Prostate gland (tissue), 2 donors: ENCODE measurements at regions of chr17 and their contacts with region 1.

Region 1: GRCh38 chr17:39621523-39622379 is 5.0 kb upstream of the PPP1R1B start:
- DNase-seq: peak; percentile 83
- H3K4me3 ChIP-seq: no peak overlapping the region
- H3K27ac ChIP-seq: no peak overlapping the region
- H3K4me1 ChIP-seq: peaks cover 22% of the 10 kb centered on the region
- H3K27me3 ChIP-seq: no peaks in the 10 kb centered on the region
- CTCF ChIP-seq: peak; percentile 98 to 100 (median 100)
- POLR2A ChIP-seq: no peak

Region 2: DNA sequence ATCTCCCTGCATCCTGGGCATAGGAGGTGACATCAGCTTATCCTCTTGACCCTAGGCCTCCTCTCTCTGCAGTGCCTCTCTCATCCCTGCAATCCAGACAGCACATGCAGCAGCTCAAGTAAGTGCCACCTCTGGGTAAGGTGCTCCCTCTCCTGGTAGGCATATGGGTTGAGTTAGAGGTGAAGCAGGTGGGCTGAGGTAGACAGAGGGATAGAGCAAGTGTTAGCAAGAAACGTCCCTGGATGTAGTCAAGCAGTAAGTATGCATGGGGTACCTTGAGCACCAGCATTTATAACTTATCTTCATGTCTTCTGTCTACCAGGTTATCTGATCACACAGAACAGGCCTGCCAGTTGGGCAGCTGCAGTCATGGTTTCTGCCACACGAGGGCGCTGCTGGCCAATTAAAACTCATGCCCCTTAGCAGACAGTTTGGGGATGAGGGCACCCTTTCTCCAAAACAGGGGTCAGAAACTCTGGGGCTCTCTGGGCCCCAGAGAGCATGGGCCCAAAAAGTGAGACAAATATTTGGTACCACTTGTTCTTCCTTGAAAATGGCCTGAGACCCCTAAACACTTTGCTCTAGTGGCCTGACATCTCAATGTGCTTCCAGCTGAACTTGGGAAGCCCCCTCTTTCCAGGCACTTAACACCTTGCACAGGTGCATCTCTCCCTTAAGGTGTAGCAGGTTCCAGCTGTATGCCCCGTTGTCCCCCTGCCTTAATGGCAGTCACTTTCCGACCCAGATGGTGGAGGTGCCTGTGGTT is 73.9 kb before region 1 on chr17:
- intact Hi-C with region 1: loop called (anchors 5 kb)
- DNase-seq: peak; percentile 56
- H3K4me3 ChIP-seq: no peak overlapping the region
- H3K27ac ChIP-seq: no peak overlapping the region
- H3K4me1 ChIP-seq: no peaks in the 10 kb centered on the region
- H3K27me3 ChIP-seq: no peaks in the 10 kb centered on the region
- CTCF ChIP-seq: peak; percentile 71 to 96 (median 94)
- POLR2A ChIP-seq: no peak

Region 3: GRCh38 chr17:39591958-39592954 is 29.5 kb before region 1 on chr17:
- intact Hi-C with region 1: no loop called
- DNase-seq: no peak
- H3K4me3 ChIP-seq: no peak overlapping the region
- H3K27ac ChIP-seq: no peak overlapping the region
- H3K4me1 ChIP-seq: no peaks in the 10 kb centered on the region
- H3K27me3 ChIP-seq: peaks cover 19% of the 10 kb centered on the region
- CTCF ChIP-seq: no peak
- POLR2A ChIP-seq: no peak

Region 4: DNA sequence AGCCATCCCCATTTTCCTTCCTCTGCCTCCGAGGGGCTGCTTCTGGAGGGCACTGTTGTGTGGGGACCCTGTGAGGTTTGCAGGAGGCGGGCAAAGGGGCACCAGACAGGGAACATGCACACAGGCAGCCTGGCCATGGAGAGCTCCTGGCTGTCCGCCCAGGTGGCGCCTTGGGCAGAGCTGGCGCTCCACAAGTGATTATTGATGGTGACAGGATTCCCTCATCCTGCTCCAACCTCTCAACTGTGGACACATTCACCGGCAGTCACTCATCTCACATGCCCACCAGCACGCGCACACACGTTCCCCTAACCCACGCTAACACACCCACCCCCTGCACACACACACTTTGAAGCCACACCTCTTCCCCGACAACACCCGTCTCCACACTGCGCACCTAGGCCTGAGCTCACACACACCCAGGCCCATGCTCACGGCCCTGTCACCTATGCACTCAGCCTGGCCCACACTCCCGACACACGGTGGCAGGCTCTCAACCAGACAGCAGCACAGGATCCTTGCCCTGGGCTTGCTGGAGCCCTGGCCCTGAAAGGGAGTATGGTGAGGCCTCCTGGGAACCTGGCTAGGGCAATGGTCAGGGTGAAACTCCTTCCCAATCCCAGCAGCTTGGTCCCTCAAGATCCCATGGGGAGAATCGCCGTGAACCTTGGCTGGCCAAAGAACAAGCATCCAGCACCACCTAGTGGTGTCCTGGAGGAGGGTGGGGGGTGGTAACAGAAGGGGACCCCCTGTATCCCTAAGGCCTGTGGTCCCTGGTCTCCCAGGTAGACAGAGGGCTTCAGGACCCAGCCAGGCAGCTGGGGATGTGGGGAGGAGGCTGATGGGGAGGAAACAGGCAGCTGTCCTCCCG is 50.1 kb after region 1 on chr17:
- intact Hi-C with region 1: loop called (anchors 5 kb)
- DNase-seq: peak; percentile 39
- H3K4me3 ChIP-seq: no peak overlapping the region
- H3K27ac ChIP-seq: no peak overlapping the region
- H3K4me1 ChIP-seq: peaks cover 23% of the 10 kb centered on the region
- H3K27me3 ChIP-seq: no peaks in the 10 kb centered on the region
- CTCF ChIP-seq: peak in 3 of 4 experiments; percentile 41 to 71 (median 69)
- POLR2A ChIP-seq: peak; percentile 15

Region 5: DNA sequence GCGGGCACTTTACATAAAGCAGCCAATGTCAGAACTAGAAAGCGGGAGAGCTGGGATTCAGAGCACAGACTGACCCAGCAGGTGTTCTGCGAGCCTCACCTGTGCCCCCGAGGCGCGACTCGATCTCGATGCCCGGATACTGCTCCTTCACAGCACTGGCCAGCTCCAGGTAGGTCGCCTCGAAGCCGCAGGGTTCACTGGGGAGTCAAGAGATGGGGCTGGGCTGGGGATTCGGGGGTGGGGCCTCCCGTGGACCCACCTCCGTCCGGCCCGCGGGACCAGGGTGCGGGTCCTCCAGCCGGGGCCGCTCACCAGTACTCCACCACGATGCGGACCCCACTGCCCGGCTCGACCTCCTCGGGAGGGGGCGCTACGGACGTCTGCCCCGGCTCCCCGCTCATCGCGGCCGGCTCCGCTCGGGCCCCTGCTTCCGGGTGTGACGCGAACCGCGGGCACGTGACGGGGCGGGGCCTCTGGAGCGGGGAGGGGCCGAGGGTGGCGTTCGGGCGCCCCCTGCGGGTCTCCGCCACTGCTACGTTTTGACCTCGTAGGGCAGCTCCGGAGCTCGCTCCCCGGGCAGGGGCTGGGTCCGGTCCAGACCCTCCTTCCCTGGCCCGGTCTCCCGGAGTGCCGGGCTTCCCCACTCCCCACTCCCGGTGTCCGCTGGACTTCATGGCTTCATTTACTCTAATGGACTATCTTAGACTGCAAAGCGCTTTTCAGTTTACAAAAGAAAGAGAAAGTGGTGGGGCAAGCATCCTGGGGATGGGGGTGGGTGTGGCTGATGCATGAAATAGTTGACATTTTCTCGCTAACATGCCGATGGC is 108.6 kb after region 1 on chr17 and contains the start of gene MIEN1:
- intact Hi-C with region 1: loop called (anchors 5 kb)
- DNase-seq: peak; percentile 90
- H3K4me3 ChIP-seq: peak within 1 kb of the TSS; percentile 61 to 85
- H3K27ac ChIP-seq: peak within 1 kb of the TSS; percentile 89 to 95
- H3K4me1 ChIP-seq: no peaks in the 10 kb centered on the region
- H3K27me3 ChIP-seq: no peaks in the 10 kb centered on the region
- CTCF ChIP-seq: peak; percentile 95 to 98 (median 96)
- POLR2A ChIP-seq: peak; percentile 81
- total RNA-seq, gene MIEN1: 46.5 to 119 TPM

Region 6: DNA sequence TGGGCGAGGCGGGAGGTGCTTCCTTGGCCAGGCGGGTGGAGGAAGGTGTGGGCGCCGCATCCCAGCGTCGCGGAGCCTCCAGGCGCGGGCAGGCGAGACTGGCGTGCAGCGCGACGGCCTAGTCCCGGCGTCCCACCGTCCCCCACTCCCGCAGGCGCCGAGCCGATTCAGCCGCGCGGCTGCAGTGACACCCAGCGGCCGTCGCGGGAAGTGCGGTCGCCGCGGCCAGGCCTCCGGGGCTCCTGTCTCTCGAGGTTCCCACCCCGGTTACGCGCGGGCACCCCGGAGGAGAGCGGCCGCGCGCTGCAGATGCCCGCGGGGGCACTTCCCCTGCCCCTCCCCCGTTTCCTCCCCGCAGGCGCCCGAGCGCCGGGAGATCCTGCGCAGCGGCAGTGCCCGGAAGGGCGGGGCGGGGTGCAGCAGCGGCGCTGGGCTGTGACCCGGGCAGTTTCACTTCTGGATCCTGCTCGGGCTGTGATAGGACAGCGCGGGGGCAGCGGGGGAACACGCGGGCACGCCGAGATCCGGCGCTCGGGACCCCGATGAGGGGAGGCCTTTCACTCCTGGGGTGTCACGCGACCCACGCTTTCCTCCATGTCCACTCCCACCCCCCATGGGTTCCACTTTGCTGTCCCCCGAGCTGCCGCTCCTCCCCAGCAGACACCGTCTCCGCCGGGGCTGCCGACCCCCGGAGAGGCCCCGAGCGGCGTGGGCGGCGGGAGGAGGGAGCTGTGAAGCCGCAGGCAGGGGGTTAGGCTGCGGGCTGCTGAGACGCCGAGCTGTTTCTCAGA is 132.6 kb after region 1 on chr17:
- intact Hi-C with region 1: loop called (anchors 2 kb)
- DNase-seq: peak; percentile 81
- H3K4me3 ChIP-seq: peak overlapping the region; percentile 61
- H3K27ac ChIP-seq: peak overlapping the region; percentile 85 to 88
- H3K4me1 ChIP-seq: no peaks in the 10 kb centered on the region
- H3K27me3 ChIP-seq: no peaks in the 10 kb centered on the region
- CTCF ChIP-seq: peak; percentile 95 to 100 (median 99)
- POLR2A ChIP-seq: peak; percentile 74